ENCODE measurements at regions of chr6 and their contacts with region 1.

Region 1: DNA sequence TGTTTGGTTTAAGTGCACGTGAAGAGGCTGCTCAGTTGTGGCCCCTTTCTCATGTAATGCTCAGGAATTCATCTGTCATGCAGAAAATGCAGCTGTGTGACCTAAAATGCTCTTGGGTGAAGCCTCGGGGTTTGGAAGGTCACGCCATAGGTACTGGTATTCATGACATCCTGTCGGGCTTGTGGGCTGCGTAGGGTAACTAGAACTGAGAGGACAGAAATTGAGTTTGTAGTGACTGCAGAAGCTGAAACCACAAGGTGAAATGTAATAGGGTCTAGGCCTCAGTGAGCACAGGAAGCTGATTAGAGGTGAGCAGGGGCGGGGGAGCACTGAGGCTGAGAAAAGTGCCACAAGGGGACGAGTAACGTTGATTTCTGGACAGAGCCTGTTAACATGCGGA is 128.8 kb downstream of the SOBP start:
- DNase-seq: peak; percentile 92
- ATAC-seq: peak; percentile 98
- H3K4me3 Mint-ChIP-seq: peak overlapping the region; percentile 1
- H3K27ac Mint-ChIP-seq: peak overlapping the region; percentile 82
- H3K4me1 Mint-ChIP-seq: peaks cover 35% of the 10 kb centered on the region
- H3K27me3 Mint-ChIP-seq: peaks cover 3% of the 10 kb centered on the region

Region 2: GRCh38 chr6:107550241-107550840 is 68.3 kb before region 1 on chr6:
- CTCF ChIA-PET with region 1: no interaction called
- DNase-seq: no peak
- ATAC-seq: no peak
- H3K4me3 Mint-ChIP-seq: no peak overlapping the region
- H3K27ac Mint-ChIP-seq: no peak overlapping the region
- H3K4me1 Mint-ChIP-seq: no peaks in the 10 kb centered on the region
- H3K27me3 Mint-ChIP-seq: peaks cover 10% of the 10 kb centered on the region

Region 3: GRCh38 chr6:107629548-107630129 is 11.0 kb after region 1 on chr6:
- CTCF ChIA-PET with region 1: interaction called, 10 read pairs
- DNase-seq: no peak
- ATAC-seq: no peak
- H3K4me3 Mint-ChIP-seq: no peak overlapping the region
- H3K27ac Mint-ChIP-seq: no peak overlapping the region
- H3K4me1 Mint-ChIP-seq: peaks cover 18% of the 10 kb centered on the region
- H3K27me3 Mint-ChIP-seq: peaks cover 39% of the 10 kb centered on the region

Measured in activated CD8-positive, alpha-beta memory T cell treated with anti-CD3 and anti-CD28 coated beads, Interleukin-2, amount 10 ng/mL, durations not matched to agents 7 days and 5 days (primary cell).